Activated naive CD4-positive, alpha-beta T cell treated with anti-CD3 and anti-CD28 coated beads for 36 hours (primary cell): ENCODE measurements at regions of chr4 and their contacts with region 1.

Region 1: DNA sequence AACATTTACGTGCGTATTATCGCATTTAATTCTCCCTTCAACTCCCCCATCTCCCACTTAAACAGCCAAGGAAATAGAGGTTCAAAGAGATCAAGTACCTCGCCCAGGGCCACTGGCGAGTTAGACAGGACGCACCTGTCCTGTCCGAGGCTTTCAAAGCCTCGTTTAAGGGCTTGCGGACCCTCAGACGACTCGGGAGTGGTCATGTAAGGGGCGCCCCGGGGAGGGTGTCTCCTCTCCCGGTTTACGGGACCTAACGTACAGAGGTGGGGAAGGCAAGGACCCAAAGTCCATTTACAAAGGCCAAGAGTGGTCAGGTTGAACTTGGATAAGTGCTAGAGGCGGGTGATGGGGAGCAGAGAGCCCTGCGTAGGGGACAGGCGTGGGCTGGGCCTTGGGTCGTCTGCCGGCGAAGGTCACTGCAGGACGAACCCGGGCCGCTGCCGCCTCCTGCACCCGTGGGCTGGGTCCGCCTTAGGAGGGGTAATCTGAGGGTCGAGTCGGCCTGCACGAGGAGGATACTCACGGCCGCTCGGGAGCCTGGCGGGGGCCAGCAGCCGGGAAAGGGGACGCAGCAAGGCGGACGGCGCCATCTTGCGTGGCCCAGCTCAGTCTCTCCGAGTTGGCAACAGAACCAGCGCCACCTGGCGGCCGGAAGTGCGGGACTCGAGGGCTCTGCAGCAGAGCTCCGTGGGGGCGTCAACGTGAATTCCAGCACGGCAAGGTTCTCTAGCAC is 5.9 kb upstream of the NAA15 start:
- DNase-seq: peak; percentile 99
- H3K4me3 Mint-ChIP-seq: peak overlapping the region; percentile 90
- H3K27ac Mint-ChIP-seq: peak overlapping the region; percentile 97
- H3K4me1 Mint-ChIP-seq: peaks cover 42% of the 10 kb centered on the region
- H3K27me3 Mint-ChIP-seq: no peaks in the 10 kb centered on the region

Region 2: GRCh38 chr4:137471895-137472294 is 1823.5 kb before region 1 on chr4:
- CTCF ChIA-PET with region 1: no interaction called
- intact Hi-C with region 1: no loop called
- DNase-seq: no peak
- H3K4me3 Mint-ChIP-seq: no peak overlapping the region
- H3K27ac Mint-ChIP-seq: no peak overlapping the region
- H3K4me1 Mint-ChIP-seq: no peaks in the 10 kb centered on the region
- H3K27me3 Mint-ChIP-seq: no peaks in the 10 kb centered on the region

Region 3: GRCh38 chr4:139099366-139099982 is 195.9 kb before region 1 on chr4:
- CTCF ChIA-PET with region 1: interaction called, 28 read pairs
- intact Hi-C with region 1: loop called (anchors 1 kb)
- DNase-seq: peak; percentile 89
- H3K4me3 Mint-ChIP-seq: no peak overlapping the region
- H3K27ac Mint-ChIP-seq: no peak overlapping the region
- H3K4me1 Mint-ChIP-seq: no peaks in the 10 kb centered on the region
- H3K27me3 Mint-ChIP-seq: no peaks in the 10 kb centered on the region

Region 4: GRCh38 chr4:139184129-139184528 is 111.2 kb before region 1 on chr4:
- CTCF ChIA-PET with region 1: interaction called, 6 read pairs
- intact Hi-C with region 1: loop called (anchors 1 kb)
- DNase-seq: no peak
- H3K4me3 Mint-ChIP-seq: no peak overlapping the region
- H3K27ac Mint-ChIP-seq: no peak overlapping the region
- H3K4me1 Mint-ChIP-seq: peaks cover 3% of the 10 kb centered on the region
- H3K27me3 Mint-ChIP-seq: no peaks in the 10 kb centered on the region

Region 5: DNA sequence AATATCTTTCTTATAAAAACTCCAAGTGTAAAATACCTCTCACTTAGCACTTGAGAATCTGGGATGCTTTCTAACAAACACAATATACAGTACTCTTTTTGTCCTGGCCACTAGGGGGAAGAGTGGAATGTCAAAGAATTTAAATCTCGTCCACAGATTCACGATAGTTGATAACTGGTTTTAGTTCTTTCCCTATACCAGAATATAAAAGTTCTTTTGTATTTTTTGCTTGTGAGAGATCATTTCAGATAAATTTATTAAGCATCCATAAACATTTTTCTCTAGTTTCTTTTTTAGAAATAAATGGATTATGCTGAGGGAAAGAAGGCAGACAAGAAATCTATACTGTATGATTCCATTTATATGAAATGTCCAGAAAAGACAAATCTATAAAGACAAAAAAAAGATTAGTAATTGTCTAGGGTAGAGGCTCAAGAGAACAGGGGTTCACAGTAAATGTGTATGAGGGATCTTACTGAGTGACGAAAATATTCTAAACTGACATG is 65.8 kb before region 1 on chr4:
- CTCF ChIA-PET with region 1: interaction called, 7 read pairs
- intact Hi-C with region 1: loop called (anchors 1 kb)
- DNase-seq: no peak
- H3K4me3 Mint-ChIP-seq: no peak overlapping the region
- H3K27ac Mint-ChIP-seq: no peak overlapping the region
- H3K4me1 Mint-ChIP-seq: no peaks in the 10 kb centered on the region
- H3K27me3 Mint-ChIP-seq: no peaks in the 10 kb centered on the region

Region 6: GRCh38 chr4:139279760-139280620 is 15.4 kb before region 1 on chr4 and contains the start of gene MGARP:
- CTCF ChIA-PET with region 1: interaction called, 13 read pairs
- intact Hi-C with region 1: no loop called
- DNase-seq: peak; percentile 22
- H3K4me3 Mint-ChIP-seq: peak within 1 kb of the TSS; percentile 65
- H3K27ac Mint-ChIP-seq: no peak within 1 kb of the TSS
- H3K4me1 Mint-ChIP-seq: peaks cover 13% of the 10 kb centered on the region
- H3K27me3 Mint-ChIP-seq: peaks cover 45% of the 10 kb centered on the region
- total RNA-seq, gene MGARP: not detected

Region 7: GRCh38 chr4:139532947-139533346 is 237.6 kb after region 1 on chr4:
- CTCF ChIA-PET with region 1: no interaction called
- intact Hi-C with region 1: no loop called
- DNase-seq: no peak
- H3K4me3 Mint-ChIP-seq: no peak overlapping the region
- H3K27ac Mint-ChIP-seq: no peak overlapping the region
- H3K4me1 Mint-ChIP-seq: peaks cover 3% of the 10 kb centered on the region
- H3K27me3 Mint-ChIP-seq: no peaks in the 10 kb centered on the region